Panc1 (cell line): ENCODE measurements at regions of chr2 and their contacts with region 1.

Region 1: DNA sequence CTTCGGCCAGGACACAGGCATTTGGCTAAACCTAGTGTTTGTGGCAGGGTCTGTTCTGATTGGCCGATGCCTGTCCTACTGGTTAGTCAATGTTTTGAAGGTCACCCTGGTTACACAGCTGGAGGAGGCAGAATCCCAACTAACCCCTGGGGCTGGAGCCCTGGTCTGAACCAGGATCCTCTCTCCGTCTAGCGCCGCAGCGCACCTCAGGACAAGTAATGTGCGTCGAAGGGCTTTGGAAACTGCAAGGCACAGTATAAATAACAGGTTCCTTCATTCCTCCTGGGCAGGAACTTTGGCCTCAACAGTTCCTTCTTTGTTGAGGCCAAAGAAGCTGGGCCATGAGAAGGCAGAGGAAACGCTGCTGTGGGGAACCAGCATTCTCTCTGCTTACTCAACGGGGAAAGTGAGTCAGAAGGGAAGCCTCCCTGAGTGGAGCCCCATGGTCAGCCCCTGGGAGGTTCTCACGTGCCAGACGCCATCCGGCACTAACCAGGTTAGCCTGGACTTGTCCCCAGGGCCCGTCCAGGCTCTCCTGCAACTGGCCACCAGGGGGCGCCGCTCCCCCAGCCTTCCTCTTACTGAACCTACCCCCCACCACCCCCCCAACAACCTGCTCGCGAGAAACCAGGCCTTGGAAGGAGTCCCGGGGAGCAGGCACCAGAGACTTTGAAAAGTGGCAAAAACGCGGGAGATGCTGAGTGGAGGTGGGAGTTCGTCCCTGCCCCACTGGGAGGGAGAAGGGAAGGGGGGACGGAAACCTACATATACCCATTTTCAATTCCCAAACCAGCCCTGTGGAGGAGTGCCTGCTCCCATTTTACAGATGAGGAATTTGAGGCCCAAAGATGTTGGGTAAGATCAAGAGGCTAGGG is 19.8 kb downstream of the TEX44 start:
- DNase-seq: peak; percentile 75
- ATAC-seq: peak; percentile 68
- H3K4me3 ChIP-seq: peak overlapping the region in 1 of 2 experiments; percentile 8; a peak in 1 of 4 replicates
- H3K27ac ChIP-seq: peak overlapping the region; percentile 92
- H3K4me1 ChIP-seq: peaks cover 46% of the 10 kb centered on the region
- H3K27me3 ChIP-seq: no peaks in the 10 kb centered on the region
- CTCF ChIP-seq: peak; percentile 97

Region 2: DNA sequence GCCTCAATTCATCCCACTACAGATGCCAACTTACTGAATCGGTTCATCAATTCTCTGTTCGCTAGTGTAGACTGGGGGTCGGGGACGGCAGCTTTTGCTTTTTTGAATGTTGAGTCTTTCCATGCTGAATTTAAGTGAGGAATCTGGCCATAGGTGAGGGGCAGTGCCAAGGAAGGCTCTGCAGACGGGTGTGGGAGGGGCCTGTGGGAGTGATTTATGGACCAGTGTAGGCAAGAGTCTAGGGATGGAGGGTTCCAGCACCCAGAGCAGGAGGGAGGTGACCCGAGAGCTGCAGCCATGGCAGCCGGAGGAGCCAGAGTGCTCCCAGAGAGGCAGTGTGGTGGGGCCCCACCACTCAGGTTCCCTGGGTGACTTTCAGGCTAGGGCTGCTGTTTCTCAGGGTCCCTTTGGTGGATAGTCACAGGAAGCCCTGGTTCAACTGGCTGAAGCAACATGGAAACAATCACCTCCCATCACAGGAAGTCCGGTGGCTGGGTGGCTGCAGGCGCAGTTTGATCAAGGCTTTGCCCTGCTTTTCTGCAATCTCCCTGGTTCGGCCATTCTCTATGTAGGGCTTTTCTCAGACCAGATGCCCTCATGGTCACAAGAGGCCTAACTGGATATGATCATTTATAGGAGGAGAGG is 36.7 kb before region 1 on chr2:
- CTCF ChIA-PET with region 1: no interaction called
- POLR2A ChIA-PET with region 1: no interaction called
- in situ Hi-C with region 1: no loop called
- intact Hi-C with region 1: no loop called
- DNase-seq: no peak
- ATAC-seq: no peak
- H3K4me3 ChIP-seq: no peak overlapping the region
- H3K27ac ChIP-seq: no peak overlapping the region
- H3K4me1 ChIP-seq: no peaks in the 10 kb centered on the region
- H3K27me3 ChIP-seq: no peaks in the 10 kb centered on the region
- CTCF ChIP-seq: no peak

Region 3: GRCh38 chr2:231662028-231662810 is 49.8 kb after region 1 on chr2:
- CTCF ChIA-PET with region 1: no interaction called
- POLR2A ChIA-PET with region 1: interaction called, 11 read pairs
- in situ Hi-C with region 1: no loop called
- intact Hi-C with region 1: no loop called
- DNase-seq: peak; percentile 71
- ATAC-seq: peak; percentile 79
- H3K4me3 ChIP-seq: peak overlapping the region; percentile 40 to 50
- H3K27ac ChIP-seq: peak overlapping the region; percentile 87
- H3K4me1 ChIP-seq: peaks cover 18% of the 10 kb centered on the region
- H3K27me3 ChIP-seq: no peaks in the 10 kb centered on the region
- CTCF ChIP-seq: no peak

Region 4: GRCh38 chr2:231696007-231696371 is 83.6 kb after region 1 on chr2:
- CTCF ChIA-PET with region 1: no interaction called
- POLR2A ChIA-PET with region 1: no interaction called
- in situ Hi-C with region 1: no loop called
- intact Hi-C with region 1: no loop called
- DNase-seq: no peak
- ATAC-seq: no peak
- H3K4me3 ChIP-seq: no peak overlapping the region
- H3K27ac ChIP-seq: no peak overlapping the region
- H3K4me1 ChIP-seq: no peaks in the 10 kb centered on the region
- H3K27me3 ChIP-seq: no peaks in the 10 kb centered on the region
- CTCF ChIP-seq: no peak

Region 5: GRCh38 chr2:231713730-231714430 is 101.5 kb after region 1 on chr2:
- CTCF ChIA-PET with region 1: interaction called, 14 read pairs
- POLR2A ChIA-PET with region 1: interaction called, 4 read pairs
- in situ Hi-C with region 1: no loop called
- intact Hi-C with region 1: loop called (anchors 1 kb)
- DNase-seq: no peak
- ATAC-seq: peak; percentile 50
- H3K4me3 ChIP-seq: no peak overlapping the region
- H3K27ac ChIP-seq: peak overlapping the region; percentile 83
- H3K4me1 ChIP-seq: peaks cover 42% of the 10 kb centered on the region
- H3K27me3 ChIP-seq: no peaks in the 10 kb centered on the region
- CTCF ChIP-seq: peak; percentile 94

Region 6: DNA sequence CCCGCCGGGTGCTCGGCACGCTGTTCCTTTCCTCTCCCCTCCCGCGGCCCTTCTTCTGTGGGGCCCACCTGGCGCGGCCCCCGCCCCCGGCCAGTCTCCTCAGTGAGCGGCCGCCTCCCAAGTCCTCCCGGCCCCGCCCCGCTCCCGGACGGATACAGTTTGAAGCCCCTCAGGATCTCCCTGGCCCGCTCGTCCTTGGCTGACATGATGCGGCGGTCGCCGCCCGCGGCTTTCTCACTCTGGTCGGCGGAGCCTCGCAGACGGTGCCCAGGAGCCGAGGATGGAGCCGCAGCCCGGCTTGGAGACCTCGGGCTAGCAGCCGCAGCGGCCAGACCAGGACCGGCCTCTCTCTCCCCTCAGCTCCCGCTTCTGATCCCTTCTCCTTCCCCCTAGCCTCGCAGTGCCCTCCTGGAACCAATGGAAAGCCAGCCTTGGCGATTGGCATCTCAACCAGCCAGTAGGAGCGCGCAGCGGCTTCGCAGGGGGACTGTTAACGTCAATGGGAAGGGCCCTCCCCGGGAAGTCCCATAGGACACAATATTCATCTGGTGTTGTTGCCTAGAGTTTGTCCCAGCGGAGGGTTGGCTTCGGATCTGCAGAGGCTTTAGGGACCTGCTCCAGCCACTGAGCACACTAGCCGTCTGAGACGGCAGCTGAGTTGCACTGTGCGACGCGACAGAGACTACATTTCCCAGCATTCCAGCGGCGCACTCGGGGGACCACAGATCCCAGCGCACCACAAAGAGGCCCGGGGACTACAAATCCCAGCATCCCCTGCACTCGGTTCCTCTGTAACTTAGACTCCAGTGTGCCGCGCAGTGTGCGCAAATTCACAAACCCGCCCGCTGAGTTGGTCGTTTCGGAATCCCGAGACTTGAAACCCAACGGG is 168.7 kb after region 1 on chr2 and contains the start of gene PDE6D:
- CTCF ChIA-PET with region 1: no interaction called
- POLR2A ChIA-PET with region 1: no interaction called
- in situ Hi-C with region 1: no loop called
- intact Hi-C with region 1: loop called (anchors 10 kb)
- DNase-seq: peak; percentile 97
- ATAC-seq: peak; percentile 98
- H3K4me3 ChIP-seq: peak within 1 kb of the TSS; percentile 84 to 93
- H3K27ac ChIP-seq: peak within 1 kb of the TSS; percentile 90
- H3K4me1 ChIP-seq: peaks cover 31% of the 10 kb centered on the region
- H3K27me3 ChIP-seq: no peaks in the 10 kb centered on the region
- CTCF ChIP-seq: no peak
- total RNA-seq, gene PDE6D: 31.4 TPM